ENCODE measurements at regions of chr15 and their contacts with region 1.

Region 1: GRCh38 chr15:84023636-84024035 is 211.9 kb upstream of the GOLGA6L4 start:
- DNase-seq: no peak
- ATAC-seq: no peak
- H3K4me3 ChIP-seq: no peak overlapping the region
- H3K27ac ChIP-seq: no peak overlapping the region
- H3K4me1 ChIP-seq: no peaks in the 10 kb centered on the region
- H3K27me3 ChIP-seq: no peaks in the 10 kb centered on the region
- CTCF ChIP-seq: peak; percentile 41

Region 2: DNA sequence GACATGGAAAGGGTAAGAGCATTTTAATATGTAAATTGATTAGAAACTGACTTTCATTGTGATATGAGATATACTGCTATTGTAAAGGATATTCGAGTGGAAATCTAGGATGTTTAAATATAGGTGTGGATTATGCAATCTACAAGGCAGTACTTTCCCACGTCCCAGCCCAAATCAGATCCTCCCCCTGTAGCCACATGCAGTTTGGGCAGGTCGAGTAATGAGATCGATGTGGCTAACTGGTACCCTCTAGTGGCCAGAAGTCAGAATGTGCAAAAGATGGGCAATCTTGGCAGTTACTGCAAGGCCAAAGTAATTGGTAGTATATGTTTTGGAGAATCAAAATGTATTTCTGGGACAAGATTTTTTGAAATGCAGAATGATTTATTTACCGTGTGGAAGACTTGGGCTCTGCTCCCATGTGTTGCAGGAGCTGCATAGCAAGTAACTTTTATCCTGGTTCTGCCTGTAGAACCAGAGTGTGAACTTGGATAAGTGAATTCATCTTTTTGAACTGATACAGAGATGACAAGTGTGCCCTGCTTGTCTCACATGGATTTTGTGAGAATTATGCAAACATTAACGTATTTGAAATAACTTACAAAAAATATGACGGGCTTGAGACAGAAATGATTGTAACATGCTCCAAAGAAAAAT is 464.2 kb before region 1 on chr15:
- intact Hi-C with region 1: loop called in 1 of 2 experiments (anchors 10 kb)
- DNase-seq: no peak
- ATAC-seq: peak in 3 of 4 donors; percentile 48 to 64 (median 57)
- H3K4me3 ChIP-seq: no peak overlapping the region
- H3K27ac ChIP-seq: no peak overlapping the region
- H3K4me1 ChIP-seq: no peaks in the 10 kb centered on the region
- H3K27me3 ChIP-seq: no peaks in the 10 kb centered on the region
- CTCF ChIP-seq: peak; percentile 68

Region 3: DNA sequence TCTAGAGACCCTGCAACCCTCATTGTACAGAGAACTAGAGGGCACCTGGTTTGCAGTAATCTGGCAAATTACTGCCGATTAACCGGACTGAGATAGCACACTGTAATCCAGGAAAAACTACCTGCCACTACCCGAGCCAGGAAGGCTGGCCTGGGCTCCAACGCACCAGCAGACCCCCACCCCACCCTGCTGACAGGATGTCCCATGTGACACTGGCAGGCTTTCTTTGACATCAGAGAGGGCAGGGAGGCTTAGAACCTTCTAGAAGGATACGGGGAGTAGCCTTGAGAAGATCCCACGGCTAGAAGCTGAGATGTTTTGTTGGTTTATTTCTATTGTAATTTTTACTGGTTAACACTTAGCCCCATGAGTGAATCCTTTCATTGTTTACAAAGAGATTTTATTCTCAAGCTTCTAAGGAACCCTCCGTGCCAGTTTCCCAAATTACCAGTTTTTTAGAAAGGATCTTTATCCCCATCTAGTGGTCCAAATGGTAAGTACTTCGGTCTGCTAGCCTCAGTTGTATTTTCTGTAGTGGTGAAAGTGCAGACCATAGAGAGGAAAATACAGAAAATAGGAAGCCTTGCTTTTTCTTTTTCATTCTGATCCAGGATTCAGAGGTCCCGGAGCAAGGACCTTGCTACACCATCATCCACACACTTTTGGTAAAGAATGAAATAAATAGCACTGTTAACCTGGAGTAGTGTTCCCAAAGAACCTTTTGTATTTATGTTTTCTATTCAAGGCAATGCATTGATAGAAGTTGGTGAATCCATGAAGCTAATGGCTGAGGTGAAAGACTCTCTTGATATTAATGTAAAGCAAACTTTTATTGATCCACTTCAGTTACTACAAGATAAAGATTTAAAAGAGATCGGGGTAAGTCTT is 451.6 kb before region 1 on chr15:
- intact Hi-C with region 1: loop called (anchors 10 kb)
- DNase-seq: no peak
- ATAC-seq: no peak
- H3K4me3 ChIP-seq: no peak overlapping the region
- H3K27ac ChIP-seq: no peak overlapping the region
- H3K4me1 ChIP-seq: no peaks in the 10 kb centered on the region
- H3K27me3 ChIP-seq: peaks cover 0 to 2% (median 0%) of the 10 kb centered on the region in 3 donors
- CTCF ChIP-seq: peak; percentile 34

Region 4: DNA sequence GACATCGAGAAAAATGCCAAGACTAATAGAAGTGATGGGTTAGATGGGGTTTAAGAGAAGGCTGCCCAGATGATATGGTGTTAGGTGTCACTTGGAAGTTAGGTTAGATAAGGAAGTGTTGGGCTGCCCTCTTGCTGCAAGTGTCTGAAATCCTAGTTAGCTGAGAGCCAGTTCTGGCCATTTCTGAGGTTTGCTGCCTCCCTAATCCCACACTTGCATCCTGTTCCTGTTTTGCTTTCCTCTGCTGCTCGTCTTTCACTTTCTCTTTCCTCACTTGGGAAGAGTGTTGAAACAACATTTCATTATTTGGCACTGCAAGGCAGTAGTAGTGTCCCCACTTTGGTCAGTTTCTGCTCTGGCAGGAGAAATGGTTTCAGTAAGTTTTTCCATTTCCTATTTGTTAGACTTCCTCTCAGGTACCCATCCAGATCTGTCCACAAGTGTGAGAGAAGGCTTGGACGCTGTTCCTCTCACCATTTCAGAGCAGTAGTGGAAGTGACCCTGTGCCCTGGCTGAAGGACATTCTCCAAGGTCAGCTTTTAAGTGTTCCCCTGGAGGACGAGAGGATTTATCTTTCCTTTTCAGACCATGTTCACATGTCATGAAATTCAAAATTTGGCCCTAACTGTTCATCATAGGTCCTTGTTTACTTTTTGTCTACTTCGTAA is 276.5 kb before region 1 on chr15:
- intact Hi-C with region 1: loop called in 1 of 2 experiments (anchors 5 kb)
- DNase-seq: no peak
- ATAC-seq: peak in 3 of 4 donors; percentile 63 to 75 (median 69)
- H3K4me3 ChIP-seq: peak overlapping the region; percentile 22
- H3K27ac ChIP-seq: peak overlapping the region; percentile 9
- H3K4me1 ChIP-seq: no peaks in the 10 kb centered on the region
- H3K27me3 ChIP-seq: no peaks in the 10 kb centered on the region
- CTCF ChIP-seq: peak; percentile 23

Region 5: GRCh38 chr15:84826369-84826823 is 802.8 kb after region 1 on chr15:
- intact Hi-C with region 1: no loop called
- DNase-seq: peak; percentile 52 to 74
- ATAC-seq: peak in 3 of 4 donors; percentile 13 to 46 (median 41)
- H3K4me3 ChIP-seq: no peak overlapping the region
- H3K27ac ChIP-seq: peak overlapping the region; percentile 99
- H3K4me1 ChIP-seq: peaks cover 99% of the 10 kb centered on the region
- H3K27me3 ChIP-seq: no peaks in the 10 kb centered on the region
- CTCF ChIP-seq: peak; percentile 17